A673 (cell line): ENCODE measurements at regions of chr12 and their contacts with region 1.

Region 1: DNA sequence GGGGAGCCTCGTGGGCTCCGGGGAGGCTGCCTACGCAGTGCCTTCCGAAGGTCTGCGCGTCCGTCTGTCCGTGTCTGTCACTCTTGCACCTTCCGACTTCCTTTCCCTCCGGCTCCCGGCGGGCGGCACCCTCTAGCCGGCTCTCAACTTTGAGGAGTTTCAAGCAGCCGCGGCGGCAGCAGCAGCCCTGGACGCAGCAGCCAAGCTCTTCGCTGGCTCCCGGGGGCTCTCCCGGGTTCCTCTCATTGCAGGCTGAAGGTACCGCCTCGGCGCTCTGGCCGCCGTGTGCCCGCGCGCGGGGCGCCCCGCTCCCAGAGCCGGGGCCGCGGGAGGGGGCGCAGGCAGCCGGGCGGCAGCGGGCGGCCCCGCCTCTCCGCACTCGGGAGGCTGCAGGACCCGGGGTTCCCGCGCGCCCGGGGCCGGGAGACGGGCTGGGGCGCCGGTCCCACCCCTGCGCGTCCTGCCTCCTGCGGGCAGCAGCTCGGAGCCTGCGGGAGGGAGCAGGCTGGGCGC is at the starts of genes AMIGO2 and PCED1B:
- DNase-seq: peak; percentile 82
- H3K4me3 ChIP-seq: peak within 1 kb of the TSS; percentile 69
- H3K27ac ChIP-seq: peak within 1 kb of the TSS; percentile 67
- H3K4me1 ChIP-seq: peaks cover 48% of the 10 kb centered on the region
- H3K27me3 ChIP-seq: no peaks in the 10 kb centered on the region
- CTCF ChIP-seq: peak; percentile 44
- total RNA-seq, gene AMIGO2: 10.9 and 16.7 TPM in 2 replicates
- total RNA-seq, gene PCED1B: 2.1 and 3.1 TPM in 2 replicates

Region 2: DNA sequence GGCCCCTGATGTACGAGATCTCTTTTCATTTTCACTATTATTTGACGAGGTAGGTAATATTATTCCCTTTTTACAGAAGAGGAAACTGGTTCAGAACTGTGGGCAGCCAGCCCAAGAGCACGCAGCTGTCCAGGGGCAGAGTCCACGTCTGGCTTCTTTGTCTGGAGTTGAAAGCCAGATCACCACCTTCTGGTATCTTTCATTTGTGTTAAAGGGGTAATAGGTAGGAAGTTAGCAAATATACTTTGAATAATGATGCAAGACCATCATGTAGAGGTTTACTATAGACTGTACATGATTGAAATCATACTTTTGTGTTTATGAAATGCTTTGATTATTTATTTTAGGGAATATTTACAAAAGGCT is 144.3 kb after region 1 on chr12:
- CTCF ChIA-PET with region 1: interaction called, 4 read pairs
- POLR2A ChIA-PET with region 1: no interaction called
- intact Hi-C with region 1: loop called (anchors 5 kb)
- DNase-seq: no peak
- H3K4me3 ChIP-seq: no peak overlapping the region
- H3K27ac ChIP-seq: peak overlapping the region; percentile 80
- H3K4me1 ChIP-seq: peaks cover 38% of the 10 kb centered on the region
- H3K27me3 ChIP-seq: no peaks in the 10 kb centered on the region
- CTCF ChIP-seq: no peak

Region 3: DNA sequence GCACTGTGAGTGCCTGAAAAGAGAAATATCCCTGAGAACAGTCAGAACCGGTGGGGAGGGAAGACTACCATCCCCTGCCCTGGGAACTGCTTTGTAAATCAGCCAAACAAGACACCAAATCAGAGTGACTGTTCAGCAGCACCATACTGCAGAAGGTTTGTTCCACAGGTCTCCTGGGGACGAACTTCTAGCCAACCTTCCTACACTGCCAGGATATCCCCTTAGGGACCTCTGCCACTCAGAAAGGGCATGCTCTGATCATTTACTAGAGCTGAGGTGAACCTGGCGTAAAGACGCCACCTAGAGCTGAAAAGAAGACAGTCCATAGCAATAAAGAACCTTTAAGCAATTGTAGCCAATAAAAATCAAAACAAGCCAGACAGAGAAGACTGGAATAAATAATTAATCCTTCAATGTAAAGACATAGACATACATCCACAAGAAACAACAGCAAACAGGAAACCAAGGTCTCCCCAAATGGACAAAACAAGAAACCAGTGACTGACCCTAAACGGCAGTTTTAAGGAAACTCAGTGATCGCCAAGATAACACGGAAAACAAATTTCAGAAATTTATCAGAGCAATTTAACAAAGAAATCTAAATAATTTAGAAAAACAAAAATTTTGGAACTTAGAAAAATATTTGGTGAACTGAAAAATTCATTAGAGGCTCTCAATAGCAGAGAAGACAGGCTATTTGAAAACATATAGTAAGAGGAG is 228.3 kb after region 1 on chr12:
- CTCF ChIA-PET with region 1: interaction called, 3 read pairs
- POLR2A ChIA-PET with region 1: no interaction called
- intact Hi-C with region 1: loop called (anchors 5 kb)
- DNase-seq: peak; percentile 86
- H3K4me3 ChIP-seq: no peak overlapping the region
- H3K27ac ChIP-seq: no peak overlapping the region
- H3K4me1 ChIP-seq: no peaks in the 10 kb centered on the region
- H3K27me3 ChIP-seq: no peaks in the 10 kb centered on the region
- CTCF ChIP-seq: peak; percentile 82

Region 4: DNA sequence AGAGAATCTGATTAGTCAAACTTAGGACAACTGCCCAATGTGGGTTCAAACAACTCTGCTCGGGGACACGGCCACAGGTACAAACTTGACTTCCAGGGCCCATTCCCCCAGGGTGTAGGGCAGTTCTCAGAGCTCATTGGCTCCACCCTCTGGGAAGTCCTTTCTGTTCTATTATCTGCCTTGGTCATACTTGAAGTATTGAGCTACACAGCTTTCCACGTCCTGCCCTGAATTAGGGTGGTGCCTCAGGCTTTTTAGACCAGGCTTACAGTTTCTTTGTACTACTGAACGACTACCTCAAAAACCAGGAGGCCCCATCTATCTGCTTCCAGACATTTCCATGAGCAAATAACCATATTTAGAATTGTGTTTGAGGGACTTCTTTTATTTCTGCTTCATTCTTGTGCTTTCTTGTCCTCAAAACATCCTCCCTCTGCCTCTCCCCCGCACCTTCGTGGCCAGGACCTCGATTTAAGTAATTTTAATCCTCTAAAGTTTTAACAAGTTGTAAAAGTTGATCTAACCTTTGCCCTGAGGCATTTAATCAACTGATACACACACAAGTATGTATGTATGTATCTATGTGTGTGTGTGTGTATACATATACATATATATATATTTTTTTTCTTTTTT is 282.0 kb after region 1 on chr12:
- CTCF ChIA-PET with region 1: no interaction called
- POLR2A ChIA-PET with region 1: no interaction called
- intact Hi-C with region 1: no loop called
- DNase-seq: peak; percentile 87
- H3K4me3 ChIP-seq: peak overlapping the region; percentile 11
- H3K27ac ChIP-seq: peak overlapping the region; percentile 81
- H3K4me1 ChIP-seq: peaks cover 50% of the 10 kb centered on the region
- H3K27me3 ChIP-seq: no peaks in the 10 kb centered on the region
- CTCF ChIP-seq: 0 out of 2 replicates have a peak, but pooled peaks have one; percentile 29